BJ (cell line): ENCODE measurements at regions of chr5 and their contacts with region 1.

Region 1: GRCh38 chr5:170100066-170100943 is 5.4 kb upstream of the FOXI1 start:
- DNase-seq: peak; percentile 15
- H3K4me3 ChIP-seq: no peak overlapping the region
- H3K27me3 ChIP-seq: 0 out of 2 replicates have a peak, but pooled peaks cover 1% of the 10 kb centered on the region
- CTCF ChIP-seq: peak; percentile 68

Region 2: GRCh38 chr5:169893571-169893970 is 206.7 kb before region 1 on chr5:
- CTCF ChIA-PET with region 1: no interaction called
- POLR2A ChIA-PET with region 1: no interaction called
- DNase-seq: no peak
- H3K4me3 ChIP-seq: no peak overlapping the region
- H3K27me3 ChIP-seq: no peaks in the 10 kb centered on the region
- CTCF ChIP-seq: no peak

Region 3: DNA sequence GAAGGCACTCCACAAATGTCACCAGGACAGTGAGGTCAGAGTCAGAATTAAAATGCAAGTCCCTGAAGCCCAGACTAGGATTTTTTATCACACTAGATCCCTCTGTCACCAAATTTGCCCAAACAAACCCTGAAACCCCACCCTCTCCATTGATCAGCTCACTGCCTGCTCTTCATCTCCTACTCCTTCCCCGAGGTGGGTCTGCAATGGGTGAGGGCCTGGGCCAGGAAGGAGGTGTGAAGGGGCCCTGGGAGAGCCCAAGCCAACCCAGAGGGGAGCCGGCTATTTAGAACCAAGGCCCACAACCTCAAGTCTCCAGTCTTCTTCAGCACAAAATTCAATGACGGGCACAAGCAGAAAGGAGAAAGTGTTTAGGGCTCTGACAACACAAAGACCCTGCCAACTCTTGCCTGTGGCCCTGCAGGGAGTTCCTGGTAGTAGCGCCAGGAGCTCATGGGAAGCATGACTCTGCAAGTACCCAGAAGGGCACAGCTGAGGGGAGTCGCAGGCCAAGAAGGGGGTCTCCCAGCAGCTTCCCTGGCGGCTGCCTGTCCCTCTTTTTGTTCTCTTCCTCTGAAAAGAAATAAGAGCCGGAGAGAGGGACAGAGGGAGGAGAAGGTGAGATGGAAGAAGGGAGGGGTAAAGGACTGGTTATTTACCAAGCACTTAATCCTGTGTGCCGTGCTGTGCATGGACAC is 10.9 kb after region 1 on chr5:
- CTCF ChIA-PET with region 1: interaction called, 18 read pairs
- POLR2A ChIA-PET with region 1: no interaction called
- DNase-seq: no peak
- H3K4me3 ChIP-seq: no peak overlapping the region
- H3K27me3 ChIP-seq: peaks cover 2% of the 10 kb centered on the region; the same call in 1 of the 2 replicates
- CTCF ChIP-seq: no peak

Region 4: DNA sequence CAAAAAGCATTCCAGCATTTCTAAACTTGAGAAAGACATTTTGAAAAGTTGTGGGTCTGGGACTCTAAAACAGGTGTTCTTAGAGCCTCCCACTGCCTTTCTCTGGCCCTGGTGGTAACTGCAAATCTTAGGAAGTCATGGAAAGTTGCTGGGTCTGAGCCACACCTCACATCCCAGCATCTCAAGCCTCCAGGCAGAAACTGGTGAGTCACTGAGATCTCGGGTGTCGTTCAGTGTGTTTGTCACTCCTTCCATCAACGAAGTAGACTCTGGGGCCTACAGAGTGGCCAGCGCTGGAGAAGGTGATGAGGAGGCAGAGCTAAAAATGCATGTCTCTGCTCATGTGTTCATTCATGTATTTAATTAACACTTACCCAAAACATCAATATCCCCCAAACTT is 72.9 kb after region 1 on chr5:
- CTCF ChIA-PET with region 1: interaction called, 14 read pairs
- POLR2A ChIA-PET with region 1: no interaction called
- DNase-seq: no peak
- H3K4me3 ChIP-seq: no peak overlapping the region
- H3K27me3 ChIP-seq: no peaks in the 10 kb centered on the region; the same call in none of the 2 replicates
- CTCF ChIP-seq: no peak